ENCODE measurements at regions of chr21 and their contacts with region 1.

Region 1: DNA sequence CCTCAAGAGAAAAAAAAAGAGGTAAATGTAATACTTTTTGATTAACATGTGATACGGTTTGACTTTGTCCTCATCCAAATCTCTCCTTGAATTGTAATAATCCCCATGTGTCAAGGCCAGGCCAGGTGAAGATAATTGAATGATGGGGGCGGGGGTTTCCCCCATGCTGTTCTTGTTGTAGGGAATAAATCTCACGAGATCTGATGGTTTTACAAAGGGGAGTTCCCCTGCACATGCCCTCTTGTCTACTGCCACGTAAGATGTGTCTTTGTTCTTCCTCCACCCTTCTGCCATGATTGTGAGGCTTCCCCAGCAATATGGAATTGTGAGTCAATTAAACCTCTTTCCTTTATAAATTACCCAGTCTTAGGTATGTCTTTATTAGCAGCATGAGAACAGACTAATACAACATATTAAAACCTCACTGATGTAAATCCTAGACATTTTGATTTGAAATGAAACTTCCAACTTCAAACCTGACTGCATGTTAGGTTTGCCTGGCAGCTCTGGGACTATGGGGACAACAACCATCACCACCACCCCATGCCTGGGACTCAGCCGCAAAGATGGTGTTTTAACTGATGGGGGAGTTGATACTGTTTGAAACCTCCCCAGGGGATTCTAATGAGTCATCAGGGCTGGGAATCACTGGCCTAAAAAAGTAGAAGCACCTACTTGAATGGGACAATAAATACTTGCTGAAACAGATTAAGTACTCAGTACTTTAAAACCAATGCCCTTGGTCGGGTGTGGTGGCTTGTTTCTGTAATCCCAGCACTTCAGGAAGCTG is 32.8 kb upstream of the BACH1 start:
- DNase-seq: no peak
- ATAC-seq: peak; percentile 86
- H3K4me3 Mint-ChIP-seq: peak overlapping the region; percentile 17
- H3K27ac Mint-ChIP-seq: peak overlapping the region; percentile 82
- H3K4me1 Mint-ChIP-seq: peaks cover 21% of the 10 kb centered on the region
- H3K27me3 Mint-ChIP-seq: no peaks in the 10 kb centered on the region
- CTCF ChIP-seq: no peak

Region 2: GRCh38 chr21:29250636-29251035 is 15.2 kb before region 1 on chr21:
- CTCF ChIA-PET with region 1: no interaction called
- POLR2A ChIA-PET with region 1: no interaction called
- intact Hi-C with region 1: loop called (anchors 2 kb)
- DNase-seq: no peak
- ATAC-seq: no peak
- H3K4me3 Mint-ChIP-seq: no peak overlapping the region
- H3K27ac Mint-ChIP-seq: no peak overlapping the region
- H3K4me1 Mint-ChIP-seq: peaks cover 4% of the 10 kb centered on the region
- H3K27me3 Mint-ChIP-seq: no peaks in the 10 kb centered on the region
- CTCF ChIP-seq: no peak

Region 3: DNA sequence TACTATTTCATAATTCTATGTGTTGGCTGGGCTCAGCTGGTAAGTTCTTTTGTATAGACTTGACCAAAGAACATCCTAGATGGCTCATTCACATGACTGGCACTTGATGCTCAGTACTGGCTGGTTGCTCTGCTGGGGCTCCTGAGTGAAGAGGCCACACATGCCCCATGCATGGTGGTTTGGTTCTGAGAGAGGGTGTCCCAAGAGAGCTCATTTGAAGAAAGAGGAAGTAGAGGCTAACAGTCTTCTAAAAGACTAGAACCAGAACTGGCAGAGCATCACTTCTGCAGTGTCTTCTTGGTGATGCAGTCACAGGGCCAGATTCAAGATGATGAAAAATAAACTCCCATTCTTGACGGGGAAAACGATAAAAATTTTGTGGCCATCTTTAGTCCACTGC is 27.6 kb after region 1 on chr21:
- CTCF ChIA-PET with region 1: no interaction called
- POLR2A ChIA-PET with region 1: interaction called, 3 read pairs
- intact Hi-C with region 1: loop called (anchors 1 kb)
- DNase-seq: peak; percentile 36
- ATAC-seq: peak; percentile 96
- H3K4me3 Mint-ChIP-seq: peak overlapping the region; percentile 11
- H3K27ac Mint-ChIP-seq: peak overlapping the region; percentile 90
- H3K4me1 Mint-ChIP-seq: peaks cover 48% of the 10 kb centered on the region
- H3K27me3 Mint-ChIP-seq: no peaks in the 10 kb centered on the region
- CTCF ChIP-seq: no peak

Measured in activated B cell treated with CpG ODN at 0.5 μM for 24 hours (primary cell).